ENCODE measurements at regions of chr16 and their contacts with region 1.

Region 1: DNA sequence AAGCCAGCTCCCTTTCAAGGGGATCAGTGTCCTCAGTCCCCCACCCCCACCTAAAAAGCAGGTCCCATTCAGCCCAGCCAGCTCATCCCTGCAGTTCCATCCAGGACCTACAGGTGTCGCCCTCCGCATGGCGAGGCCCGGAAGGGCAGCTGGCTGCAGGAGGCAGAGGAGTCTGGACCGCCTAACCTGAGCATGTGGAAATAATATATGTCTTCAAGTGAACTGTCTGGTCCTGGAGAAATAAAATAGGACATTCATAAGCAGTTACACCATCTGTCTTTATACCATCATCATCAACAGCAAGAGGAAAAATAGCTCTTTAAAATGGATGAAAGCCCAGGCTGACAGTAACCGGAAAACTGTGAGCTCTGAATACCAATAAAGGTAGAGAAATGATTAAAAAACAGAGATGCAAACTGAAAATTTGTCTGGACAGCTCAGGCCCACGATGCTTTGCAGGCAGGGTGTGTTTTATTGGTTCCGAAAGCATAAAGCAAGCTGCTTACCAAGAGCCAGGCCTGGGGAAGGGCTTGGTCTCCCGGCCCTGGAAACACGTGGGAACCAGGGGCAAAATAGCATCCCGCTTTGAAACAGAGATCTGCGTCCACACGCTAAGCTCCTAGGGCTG is 215.2 kb downstream of the ZFHX3 start:
- DNase-seq: peak; percentile 7 to 83 (median 47)
- ATAC-seq: peak; percentile 82
- H3K4me3 ChIP-seq: no peak overlapping the region
- H3K4me3 Mint-ChIP-seq: no peak overlapping the region
- H3K27ac ChIP-seq: no peak overlapping the region
- H3K27ac Mint-ChIP-seq: no peak overlapping the region
- H3K4me1 ChIP-seq: no peaks in the 10 kb centered on the region
- H3K4me1 Mint-ChIP-seq: peaks cover 0 to 7% (median 0%) of the 10 kb centered on the region in 7 donors
- H3K27me3 ChIP-seq: no peaks in the 10 kb centered on the region
- H3K27me3 Mint-ChIP-seq: peaks cover 0 to 5% (median 0%) of the 10 kb centered on the region in 5 donors

Region 2: GRCh38 chr16:72124761-72125634 is 707.7 kb before region 1 on chr16:
- CTCF ChIA-PET with region 1: no interaction called
- POLR2A ChIA-PET with region 1: no interaction called
- intact Hi-C with region 1: loop called in 1 of 2 experiments (anchors 10 kb)
- DNase-seq: peak in 7 of 9 donors; percentile 30 to 58 (median 55)
- ATAC-seq: peak; percentile 81
- H3K4me3 ChIP-seq: no peak overlapping the region
- H3K4me3 Mint-ChIP-seq: peak overlapping the region in 1 of 10 donors; percentile 11
- H3K27ac ChIP-seq: no peak overlapping the region
- H3K27ac Mint-ChIP-seq: peak overlapping the region in 2 of 9 donors; percentile 22 to 55
- H3K4me1 ChIP-seq: no peaks in the 10 kb centered on the region
- H3K4me1 Mint-ChIP-seq: peaks cover 0 to 7% (median 0%) of the 10 kb centered on the region in 7 donors
- H3K27me3 ChIP-seq: no peaks in the 10 kb centered on the region
- H3K27me3 Mint-ChIP-seq: no peaks in the 10 kb centered on the region

Region 3: GRCh38 chr16:72961121-72961763 is 128.5 kb after region 1 on chr16:
- CTCF ChIA-PET with region 1: no interaction called
- POLR2A ChIA-PET with region 1: no interaction called
- intact Hi-C with region 1: loop called in 1 of 2 experiments (anchors 5 kb)
- DNase-seq: no peak
- ATAC-seq: no peak
- H3K4me3 ChIP-seq: no peak overlapping the region
- H3K4me3 Mint-ChIP-seq: no peak overlapping the region
- H3K27ac ChIP-seq: no peak overlapping the region
- H3K27ac Mint-ChIP-seq: peak overlapping the region in 1 of 9 donors; percentile 55
- H3K4me1 ChIP-seq: no peaks in the 10 kb centered on the region
- H3K4me1 Mint-ChIP-seq: peaks cover 0 to 2% (median 0%) of the 10 kb centered on the region in 7 donors
- H3K27me3 ChIP-seq: no peaks in the 10 kb centered on the region
- H3K27me3 Mint-ChIP-seq: peaks cover 0 to 3% (median 0%) of the 10 kb centered on the region in 5 donors

Region 4: GRCh38 chr16:73047518-73048291 is 215.0 kb after region 1 on chr16 and contains the start of gene ZFHX3:
- CTCF ChIA-PET with region 1: no interaction called
- POLR2A ChIA-PET with region 1: no interaction called
- intact Hi-C with region 1: loop called in 1 of 2 experiments (anchors 5 kb)
- DNase-seq: peak in 6 of 9 donors; percentile 19 to 48 (median 34)
- ATAC-seq: peak; percentile 83
- H3K4me3 ChIP-seq: no peak within 1 kb of the TSS
- H3K4me3 Mint-ChIP-seq: peak within 1 kb of the TSS in 8 of 10 donors; percentile 39 to 81 (median 66)
- H3K27ac ChIP-seq: no peak within 1 kb of the TSS
- H3K27ac Mint-ChIP-seq: peak within 1 kb of the TSS in 2 of 9 donors; percentile 31 to 54
- H3K4me1 ChIP-seq: no peaks in the 10 kb centered on the region
- H3K4me1 Mint-ChIP-seq: peaks cover 0 to 14% (median 6%) of the 10 kb centered on the region in 7 donors
- H3K27me3 ChIP-seq: peaks cover 3 to 4% of the 10 kb centered on the region in 2 donors
- H3K27me3 Mint-ChIP-seq: peaks cover 9 to 47% (median 27%) of the 10 kb centered on the region in 5 donors
- total RNA-seq, gene ZFHX3: 1.5 to 9.8 (median 2.2) TPM

Region 5: DNA sequence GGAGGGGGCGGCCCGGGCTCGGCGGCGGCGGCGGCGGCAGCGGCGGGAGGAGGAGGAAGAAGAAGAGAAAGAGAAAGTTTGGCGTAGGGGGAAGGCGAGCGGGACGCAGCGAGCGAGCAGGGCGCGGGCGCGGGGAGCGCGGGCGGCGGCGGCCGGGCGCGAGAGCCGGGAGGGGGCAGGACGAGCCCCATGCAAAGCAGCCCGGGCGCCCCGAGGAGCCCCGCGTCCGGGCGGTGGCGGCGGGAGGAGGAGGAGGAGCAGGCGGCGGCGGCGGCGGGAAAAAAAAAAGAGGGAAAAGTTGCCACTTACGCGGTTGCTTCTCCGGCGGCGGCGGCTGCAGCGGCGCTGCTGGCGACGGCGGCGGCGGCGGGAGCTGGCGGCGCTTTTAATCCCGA is 225.5 kb after region 1 on chr16:
- CTCF ChIA-PET with region 1: no interaction called
- POLR2A ChIA-PET with region 1: no interaction called
- intact Hi-C with region 1: loop called in 1 of 2 experiments (anchors 5 kb)
- DNase-seq: peak in 4 of 9 donors; percentile 11 to 55 (median 20)
- ATAC-seq: peak; percentile 63
- H3K4me3 ChIP-seq: no peak overlapping the region
- H3K4me3 Mint-ChIP-seq: peak overlapping the region in 9 of 10 donors; percentile 29 to 94 (median 54)
- H3K27ac ChIP-seq: no peak overlapping the region
- H3K27ac Mint-ChIP-seq: no peak overlapping the region
- H3K4me1 ChIP-seq: peaks cover 0 to 3% of the 10 kb centered on the region in 2 donors
- H3K4me1 Mint-ChIP-seq: peaks cover 19 to 40% (median 30%) of the 10 kb centered on the region in 7 donors
- H3K27me3 ChIP-seq: peaks cover 0 to 12% of the 10 kb centered on the region in 2 donors
- H3K27me3 Mint-ChIP-seq: peaks cover 41 to 77% (median 62%) of the 10 kb centered on the region in 5 donors

Region 6: GRCh38 chr16:73196670-73197069 is 363.9 kb after region 1 on chr16:
- CTCF ChIA-PET with region 1: interaction called, 10 read pairs
- POLR2A ChIA-PET with region 1: no interaction called
- intact Hi-C with region 1: loop called in 1 of 2 experiments (anchors 1 kb)
- DNase-seq: peak in 2 of 9 donors; percentile 16 to 20
- ATAC-seq: peak; percentile 75
- H3K4me3 ChIP-seq: no peak overlapping the region
- H3K4me3 Mint-ChIP-seq: no peak overlapping the region
- H3K27ac ChIP-seq: no peak overlapping the region
- H3K27ac Mint-ChIP-seq: no peak overlapping the region
- H3K4me1 ChIP-seq: no peaks in the 10 kb centered on the region
- H3K4me1 Mint-ChIP-seq: no peaks in the 10 kb centered on the region
- H3K27me3 ChIP-seq: no peaks in the 10 kb centered on the region
- H3K27me3 Mint-ChIP-seq: peaks cover 0 to 2% (median 0%) of the 10 kb centered on the region in 5 donors

Region 7: DNA sequence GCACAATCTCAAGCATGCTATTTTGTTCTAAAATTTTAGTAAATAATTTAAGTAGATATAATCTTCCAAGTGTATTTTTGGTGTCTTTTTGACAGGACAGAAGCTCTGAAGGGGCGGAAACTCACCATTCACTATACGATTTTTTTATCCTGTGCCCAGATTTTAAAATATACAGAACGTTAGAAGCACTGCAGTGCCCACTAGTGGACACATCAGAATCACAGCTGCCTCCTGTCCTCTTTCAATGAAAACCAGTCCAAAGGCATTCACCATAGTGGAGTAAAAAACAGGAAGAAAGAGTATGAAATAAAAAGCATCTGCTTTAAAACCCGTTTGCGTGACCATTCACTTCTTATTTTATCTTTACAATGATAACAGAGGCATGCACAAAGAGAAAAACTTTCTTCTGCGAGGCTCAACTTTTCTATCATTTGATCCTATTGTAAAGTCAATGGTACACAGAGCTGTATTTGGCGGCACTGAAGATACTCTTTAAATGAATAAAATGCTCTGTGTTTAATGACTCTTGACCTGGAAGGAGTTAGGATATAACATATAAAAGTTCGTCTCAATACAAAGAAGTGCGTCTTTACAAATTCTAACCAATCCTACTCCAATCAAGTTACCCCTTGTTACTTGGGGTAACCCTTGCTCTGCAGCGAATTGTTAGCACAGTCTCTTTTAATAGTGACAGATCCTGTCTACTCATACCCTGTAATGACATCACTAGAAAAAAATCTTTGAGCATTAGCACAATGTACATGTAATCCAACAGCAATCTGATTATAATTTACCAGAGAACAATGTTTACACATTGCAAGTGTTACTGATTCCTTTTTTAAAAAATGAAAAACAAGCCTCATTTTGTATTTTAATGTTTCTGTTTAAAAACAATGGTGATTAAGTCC is 1124.1 kb after region 1 on chr16:
- CTCF ChIA-PET with region 1: no interaction called
- POLR2A ChIA-PET with region 1: no interaction called
- intact Hi-C with region 1: loop called in 1 of 2 experiments (anchors 5 kb)
- DNase-seq: peak in 6 of 9 donors; percentile 1 to 25 (median 10)
- ATAC-seq: peak; percentile 44
- H3K4me3 ChIP-seq: no peak overlapping the region
- H3K4me3 Mint-ChIP-seq: no peak overlapping the region
- H3K27ac ChIP-seq: no peak overlapping the region
- H3K27ac Mint-ChIP-seq: no peak overlapping the region
- H3K4me1 ChIP-seq: no peaks in the 10 kb centered on the region
- H3K4me1 Mint-ChIP-seq: no peaks in the 10 kb centered on the region
- H3K27me3 ChIP-seq: no peaks in the 10 kb centered on the region
- H3K27me3 Mint-ChIP-seq: peaks cover 0 to 20% (median 3%) of the 10 kb centered on the region in 5 donors

Measured in naive thymus-derived CD4-positive, alpha-beta T cell (primary cell).